Sciatic nerve (tissue), 2 donors: ENCODE measurements at regions of chr11 and their contacts with region 1.

Region 1: DNA sequence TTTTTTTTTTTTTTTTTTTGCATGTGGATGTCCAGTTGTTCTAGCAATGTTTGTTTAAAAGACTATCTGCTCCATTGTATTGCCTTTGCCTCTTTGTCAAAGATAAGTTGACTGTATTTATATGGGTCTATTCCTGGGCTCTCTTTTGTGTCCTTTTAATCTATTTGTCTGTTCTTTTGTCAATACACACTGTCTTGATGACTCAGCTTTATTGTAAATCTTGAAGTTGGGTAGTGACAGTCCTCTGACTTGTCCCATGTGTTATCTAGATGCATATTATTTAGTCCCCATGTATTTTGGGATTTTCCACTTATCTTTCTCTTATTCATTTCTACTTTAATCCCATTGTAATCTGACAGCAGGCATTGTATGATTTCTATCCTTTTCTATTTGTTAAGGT is 3.3 kb downstream of the CCDC81 start:
- DNase-seq: no peak
- ATAC-seq: no peak

Region 2: DNA sequence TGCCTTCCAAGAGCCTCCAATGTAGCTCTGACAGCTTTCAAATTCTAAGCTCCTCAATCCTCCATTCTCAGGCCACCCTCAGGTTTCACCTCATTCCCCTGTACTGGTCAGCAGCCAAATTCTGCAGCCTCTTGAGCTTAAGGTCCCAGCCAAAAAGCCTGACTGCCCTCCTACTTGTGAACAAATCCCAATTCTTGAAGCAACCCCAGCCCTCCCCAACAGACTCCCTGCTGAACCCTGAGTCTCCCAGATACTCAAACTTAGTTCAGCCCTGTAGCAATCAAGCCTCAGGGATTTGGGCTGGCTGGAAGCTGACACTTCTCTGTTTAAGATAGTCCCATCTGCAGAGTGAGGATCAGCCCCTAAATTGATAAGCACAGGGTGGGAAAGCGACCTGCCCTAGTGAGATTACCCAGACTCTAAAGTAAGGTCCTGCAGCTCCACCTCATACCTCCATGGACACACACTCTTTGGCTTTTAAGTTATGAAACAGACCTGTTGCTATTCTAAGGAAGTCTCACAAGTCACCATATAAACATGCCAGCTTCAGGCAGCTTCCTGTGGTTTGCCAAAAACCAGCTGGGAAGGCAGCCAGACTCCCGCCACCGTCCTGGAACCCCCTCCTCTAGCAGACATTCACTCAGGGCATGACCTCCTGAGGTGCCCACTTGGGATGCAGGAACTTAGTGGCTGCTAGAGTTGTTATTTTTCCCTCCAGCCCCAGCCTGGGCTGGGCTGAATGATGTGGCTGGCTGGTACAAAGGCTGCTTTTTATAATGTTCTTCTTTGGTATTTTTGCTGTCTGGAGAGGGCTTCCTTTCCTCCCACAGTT is 226.6 kb before region 1 on chr11:
- intact Hi-C with region 1: no loop called
- DNase-seq: peak; percentile 70
- ATAC-seq: peak; percentile 84

Region 3: DNA sequence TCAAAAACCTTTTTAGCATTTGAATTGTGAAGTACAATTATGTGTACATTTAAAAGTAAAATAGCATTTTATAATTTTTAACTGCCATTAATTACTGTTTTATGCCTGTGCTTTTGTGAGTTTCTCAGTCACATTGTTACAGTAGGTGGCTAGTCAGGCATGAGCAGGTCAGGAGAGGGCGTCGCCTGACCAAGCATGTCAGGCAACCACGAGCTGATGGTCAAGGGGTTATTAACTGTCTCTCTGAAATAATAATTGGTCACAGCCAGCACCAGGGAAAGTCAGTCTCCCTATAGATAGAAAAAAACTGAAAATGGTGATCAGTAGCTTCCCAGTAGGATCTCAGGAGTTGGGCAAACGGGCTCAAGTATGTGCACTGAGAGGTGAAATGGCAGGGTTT is 22.7 kb before region 1 on chr11:
- intact Hi-C with region 1: loop called (anchors 1 kb)
- DNase-seq: no peak
- ATAC-seq: no peak